ENCODE measurements at regions of chr6 and their contacts with region 1.

Region 1: GRCh38 chr6:167485186-167485978 is 160.5 kb downstream of the TTLL2 start:
- DNase-seq: no peak

Region 2: GRCh38 chr6:166253281-166253681 is 1232.1 kb before region 1 on chr6:
- intact Hi-C with region 1: loop called in 1 of 2 experiments (anchors 5 kb)
- DNase-seq: peak; percentile 88

Region 3: DNA sequence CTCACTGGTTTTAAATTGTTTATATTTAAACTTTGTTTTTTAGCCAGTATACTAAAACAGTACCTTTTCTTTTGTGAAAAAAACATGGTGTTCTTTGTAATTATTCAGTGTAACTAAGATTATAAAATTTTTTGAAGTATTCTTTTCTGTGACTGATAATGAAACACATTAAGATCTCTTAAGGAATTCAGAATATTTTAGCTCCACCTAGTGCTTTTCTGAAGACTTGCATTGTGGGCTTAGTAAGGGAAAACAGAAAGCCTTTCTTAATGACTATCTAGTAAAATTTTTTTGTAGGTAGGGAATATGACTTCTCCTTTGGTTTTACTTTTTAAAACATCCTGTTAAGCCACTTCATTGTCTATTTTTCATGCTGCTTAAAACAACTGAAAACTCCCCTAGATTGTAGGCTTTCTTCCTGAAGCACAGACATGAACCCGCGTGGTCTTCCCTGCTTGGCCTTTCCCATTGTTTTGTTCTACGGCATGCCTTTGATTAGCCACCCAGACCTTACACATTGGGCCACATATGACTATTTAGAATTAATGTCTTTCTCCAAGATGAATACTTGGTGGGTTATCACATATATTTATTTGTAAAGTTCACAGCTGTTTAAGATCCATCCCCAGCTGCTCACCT is 413.4 kb after region 1 on chr6:
- intact Hi-C with region 1: loop called (anchors 10 kb)
- DNase-seq: no peak

Region 4: DNA sequence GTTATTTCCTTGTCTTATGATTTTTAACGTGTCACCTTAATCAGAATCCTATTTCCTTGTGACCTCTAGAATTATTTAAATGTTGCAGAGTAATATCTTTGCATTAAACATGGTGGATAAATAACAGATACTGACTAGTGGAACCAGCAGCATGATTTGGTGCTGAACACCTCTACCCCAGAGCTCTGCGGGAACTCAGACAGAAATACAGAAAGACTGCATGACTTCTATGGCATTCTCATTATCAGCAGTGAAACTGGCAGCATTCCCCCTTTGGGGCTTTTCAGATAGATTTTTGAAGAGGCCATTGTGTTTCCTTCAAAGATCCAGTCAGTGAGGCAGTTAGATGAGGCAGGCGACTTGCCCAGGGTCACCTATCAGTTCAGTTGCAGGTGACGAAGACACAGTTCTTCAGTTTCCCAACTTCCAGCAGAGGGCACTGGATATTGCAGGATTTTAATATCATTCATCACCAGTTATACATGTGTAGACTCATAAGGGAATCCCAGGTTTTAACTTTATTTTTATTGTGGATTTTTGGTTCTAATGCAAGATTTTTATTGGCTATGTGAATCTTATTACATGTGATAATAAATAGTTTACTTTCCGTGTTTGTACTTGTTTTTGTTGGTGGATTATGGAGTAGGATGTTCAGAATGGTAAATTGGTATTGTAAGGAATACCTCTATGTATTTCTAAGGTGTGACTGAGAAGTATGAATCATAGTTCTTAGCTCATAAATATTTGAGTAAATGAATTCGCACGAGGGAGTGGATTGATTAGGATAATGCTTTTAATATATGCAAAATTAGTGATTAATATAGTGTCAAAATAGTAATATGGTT is 422.7 kb after region 1 on chr6:
- intact Hi-C with region 1: loop called in 1 of 2 experiments (anchors 10 kb)
- DNase-seq: no peak